Mammary epithelial cell (primary cell): ENCODE measurements at regions of chr6 and their contacts with region 1.

Region 1: DNA sequence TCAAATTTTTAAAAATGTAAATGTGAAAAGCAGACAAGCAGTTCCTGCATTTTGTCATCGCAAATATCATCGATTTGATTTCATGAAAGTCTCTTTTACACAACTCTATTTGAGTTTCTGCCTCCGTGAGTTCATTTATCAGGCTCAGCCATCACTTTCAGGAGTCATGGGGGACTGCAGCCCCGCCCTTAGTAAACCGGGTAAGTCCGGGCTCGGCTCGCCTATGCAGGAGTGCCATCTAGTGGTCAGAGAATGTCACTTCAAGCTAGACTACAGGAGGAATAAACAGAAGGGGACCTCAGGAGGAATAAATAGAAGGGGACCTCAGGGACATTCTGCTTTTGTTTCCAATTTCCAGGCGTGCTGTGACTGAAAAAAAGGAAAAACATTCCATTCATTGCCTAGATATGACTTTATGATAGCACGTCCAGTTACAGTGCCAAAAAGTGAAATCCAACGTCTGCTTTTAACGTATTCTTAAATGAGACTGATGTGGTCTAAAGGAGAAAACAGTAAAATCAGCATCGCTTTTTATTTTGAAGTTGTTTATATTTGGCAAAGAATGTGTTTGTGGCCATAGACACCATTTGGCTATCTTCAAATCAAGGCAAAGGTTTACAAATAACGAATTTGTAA is 333.9 kb downstream of the HACE1 start:
- DNase-seq: peak; percentile 62
- H3K4me3 ChIP-seq: peak overlapping the region; percentile 30 to 44 (median 36)
- H3K27ac ChIP-seq: no peak overlapping the region
- H3K4me1 ChIP-seq: no peaks in the 10 kb centered on the region
- H3K27me3 ChIP-seq: no peaks in the 10 kb centered on the region
- CTCF ChIP-seq: peak; percentile 84 to 97

Region 2: DNA sequence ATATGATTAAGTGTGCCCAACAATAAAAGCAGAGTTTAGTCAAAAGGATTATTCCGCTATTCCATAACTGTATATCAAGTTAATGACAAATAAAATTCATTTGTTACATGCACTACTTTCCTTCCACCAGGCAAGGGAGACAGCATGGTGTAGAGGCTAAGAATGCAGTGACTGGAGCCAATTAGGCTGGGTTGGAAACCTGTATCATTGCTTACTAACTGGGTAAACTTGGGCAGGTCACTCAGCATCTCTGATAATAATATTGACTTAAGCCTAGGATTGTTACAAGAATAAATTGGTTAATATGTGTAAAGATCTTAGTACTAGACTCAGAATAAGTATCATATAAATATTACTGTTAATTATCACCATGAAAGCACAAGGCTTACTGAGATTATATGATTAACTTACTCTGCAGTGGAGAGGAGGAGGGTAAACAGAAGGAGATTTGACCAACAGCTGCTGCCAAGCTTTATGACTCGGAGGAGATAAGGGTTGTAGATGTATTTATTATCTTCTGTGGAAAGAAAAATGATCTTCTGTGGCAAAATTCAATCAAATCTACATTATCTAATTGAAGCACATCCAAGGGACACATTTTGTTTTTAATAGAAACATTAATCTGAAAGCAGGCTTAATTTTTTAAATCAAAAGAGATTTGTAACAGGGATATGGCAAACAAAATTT is 1672.4 kb before region 1 on chr6:
- CTCF ChIA-PET with region 1: no interaction called
- dilution Hi-C with region 1: no loop called
- in situ Hi-C with region 1: no loop called
- intact Hi-C with region 1: loop called (anchors 1 kb)
- DNase-seq: no peak
- H3K4me3 ChIP-seq: no peak overlapping the region
- H3K27ac ChIP-seq: no peak overlapping the region
- H3K4me1 ChIP-seq: no peaks in the 10 kb centered on the region
- H3K27me3 ChIP-seq: no peaks in the 10 kb centered on the region
- CTCF ChIP-seq: no peak

Region 3: DNA sequence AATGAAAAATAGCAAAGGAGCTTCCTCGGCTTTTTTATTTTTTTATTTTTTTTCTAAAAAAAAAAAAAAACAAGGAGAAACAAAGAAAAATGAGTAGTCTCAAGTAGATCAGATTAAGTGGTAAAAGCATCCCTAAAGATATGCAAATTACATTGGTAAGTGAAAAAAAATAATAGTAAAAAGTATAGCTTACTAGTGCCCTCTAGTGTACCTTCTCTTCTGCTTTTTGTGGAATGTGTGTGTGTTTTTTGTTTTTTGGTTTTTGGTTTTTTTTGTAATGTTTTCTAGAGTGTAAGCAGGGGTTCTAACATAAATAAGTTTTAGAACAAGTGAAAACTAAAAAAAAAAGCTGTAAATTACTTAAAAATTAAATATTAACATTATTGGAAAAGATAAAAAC is 728.1 kb before region 1 on chr6:
- CTCF ChIA-PET with region 1: no interaction called
- dilution Hi-C with region 1: no loop called
- in situ Hi-C with region 1: no loop called
- intact Hi-C with region 1: loop called (anchors 2 kb)
- DNase-seq: no peak
- H3K4me3 ChIP-seq: no peak overlapping the region
- H3K27ac ChIP-seq: no peak overlapping the region
- H3K4me1 ChIP-seq: no peaks in the 10 kb centered on the region
- H3K27me3 ChIP-seq: no peaks in the 10 kb centered on the region
- CTCF ChIP-seq: peak; percentile 31 to 49

Region 4: GRCh38 chr6:104239971-104240370 is 285.8 kb before region 1 on chr6:
- CTCF ChIA-PET with region 1: no interaction called
- dilution Hi-C with region 1: no loop called
- in situ Hi-C with region 1: no loop called
- intact Hi-C with region 1: loop called (anchors 10 kb)
- DNase-seq: no peak
- H3K4me3 ChIP-seq: no peak overlapping the region
- H3K27ac ChIP-seq: no peak overlapping the region
- H3K4me1 ChIP-seq: no peaks in the 10 kb centered on the region
- H3K27me3 ChIP-seq: no peaks in the 10 kb centered on the region
- CTCF ChIP-seq: no peak

Region 5: GRCh38 chr6:104537180-104537579 is 11.4 kb after region 1 on chr6:
- CTCF ChIA-PET with region 1: interaction called, 18 read pairs
- dilution Hi-C with region 1: no loop called
- in situ Hi-C with region 1: no loop called
- intact Hi-C with region 1: no loop called
- DNase-seq: peak; percentile 59
- H3K4me3 ChIP-seq: no peak overlapping the region
- H3K27ac ChIP-seq: no peak overlapping the region
- H3K4me1 ChIP-seq: no peaks in the 10 kb centered on the region
- H3K27me3 ChIP-seq: no peaks in the 10 kb centered on the region
- CTCF ChIP-seq: no peak

Region 6: GRCh38 chr6:104771258-104771832 is 245.6 kb after region 1 on chr6:
- CTCF ChIA-PET with region 1: interaction called, 11 read pairs
- dilution Hi-C with region 1: no loop called
- in situ Hi-C with region 1: loop called in 1 of 2 experiments (anchors 25 kb)
- intact Hi-C with region 1: loop called (anchors 1 kb)
- DNase-seq: no peak
- H3K4me3 ChIP-seq: no peak overlapping the region
- H3K27ac ChIP-seq: no peak overlapping the region
- H3K4me1 ChIP-seq: no peaks in the 10 kb centered on the region
- H3K27me3 ChIP-seq: no peaks in the 10 kb centered on the region
- CTCF ChIP-seq: peak; percentile 42 to 52